Right ventricle myocardium inferior (tissue), 1 donor: ENCODE measurements at regions of chr6 and their contacts with region 1.

Region 1: GRCh38 chr6:137013738-137014602 is 30.8 kb downstream of the IL20RA start:
- DNase-seq: no peak
- ATAC-seq: peak; percentile 81

Region 2: DNA sequence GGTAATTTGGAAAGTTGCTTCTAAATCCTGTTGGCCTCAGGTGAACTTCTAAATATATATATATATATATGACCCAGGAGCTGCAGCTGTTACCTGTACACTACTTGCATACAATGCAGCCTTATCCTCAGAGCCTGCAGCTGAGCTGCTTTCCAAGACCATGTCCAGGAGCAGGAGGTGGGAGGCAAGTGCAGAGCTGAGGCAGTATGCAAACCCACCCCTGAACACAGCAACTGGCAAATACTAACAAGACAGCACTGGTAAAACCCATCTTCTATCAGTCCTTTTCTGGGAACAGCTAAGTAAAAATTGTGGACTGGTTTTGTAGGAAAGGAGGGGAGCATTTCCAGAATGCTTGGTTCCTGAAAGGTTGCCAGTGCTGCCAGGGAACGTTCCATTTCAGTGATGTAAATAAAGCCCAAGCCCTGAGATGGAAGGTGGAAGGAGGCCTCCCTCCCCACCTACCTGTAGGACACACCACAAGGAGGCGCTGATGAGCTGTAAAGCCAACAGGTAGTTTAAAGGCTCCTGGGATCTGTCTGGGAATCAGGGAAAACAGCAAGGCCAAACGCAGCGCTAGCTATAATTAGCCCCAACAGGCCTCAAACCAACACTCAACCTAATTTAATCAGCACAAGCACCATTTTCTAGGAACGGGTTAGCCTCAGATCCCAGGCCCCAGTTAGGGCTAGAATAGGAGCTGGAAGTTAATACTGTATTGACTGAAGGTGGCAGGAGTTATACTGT is 369.9 kb before region 1 on chr6:
- intact Hi-C with region 1: loop called (anchors 5 kb)
- DNase-seq: peak; percentile 88
- ATAC-seq: peak; percentile 95

Region 3: DNA sequence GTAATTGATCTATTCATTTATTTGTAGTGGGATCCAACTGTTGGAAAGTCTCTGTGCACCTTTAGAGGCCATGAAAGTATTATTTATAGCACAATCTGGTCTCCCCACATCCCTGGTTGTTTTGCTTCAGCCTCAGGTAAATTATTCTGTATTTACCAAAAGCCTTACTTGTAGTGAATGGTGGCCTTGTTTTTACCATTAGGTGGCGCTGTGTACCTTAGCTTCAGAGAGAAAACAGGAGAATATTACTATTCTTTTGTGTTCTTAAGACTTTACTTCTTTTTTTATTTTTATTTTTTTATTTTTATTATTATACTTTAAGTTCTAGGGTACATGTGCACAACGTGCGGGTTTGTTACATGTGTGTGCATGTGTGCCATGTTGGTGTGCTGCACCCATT is 167.9 kb before region 1 on chr6:
- intact Hi-C with region 1: loop called (anchors 5 kb)
- DNase-seq: no peak
- ATAC-seq: no peak